ENCODE measurements at regions of chr1 and their contacts with region 1.

Region 1: GRCh38 chr1:26889551-26890466 is at the start of gene GPN2:
- DNase-seq: peak; percentile 66

Region 2: DNA sequence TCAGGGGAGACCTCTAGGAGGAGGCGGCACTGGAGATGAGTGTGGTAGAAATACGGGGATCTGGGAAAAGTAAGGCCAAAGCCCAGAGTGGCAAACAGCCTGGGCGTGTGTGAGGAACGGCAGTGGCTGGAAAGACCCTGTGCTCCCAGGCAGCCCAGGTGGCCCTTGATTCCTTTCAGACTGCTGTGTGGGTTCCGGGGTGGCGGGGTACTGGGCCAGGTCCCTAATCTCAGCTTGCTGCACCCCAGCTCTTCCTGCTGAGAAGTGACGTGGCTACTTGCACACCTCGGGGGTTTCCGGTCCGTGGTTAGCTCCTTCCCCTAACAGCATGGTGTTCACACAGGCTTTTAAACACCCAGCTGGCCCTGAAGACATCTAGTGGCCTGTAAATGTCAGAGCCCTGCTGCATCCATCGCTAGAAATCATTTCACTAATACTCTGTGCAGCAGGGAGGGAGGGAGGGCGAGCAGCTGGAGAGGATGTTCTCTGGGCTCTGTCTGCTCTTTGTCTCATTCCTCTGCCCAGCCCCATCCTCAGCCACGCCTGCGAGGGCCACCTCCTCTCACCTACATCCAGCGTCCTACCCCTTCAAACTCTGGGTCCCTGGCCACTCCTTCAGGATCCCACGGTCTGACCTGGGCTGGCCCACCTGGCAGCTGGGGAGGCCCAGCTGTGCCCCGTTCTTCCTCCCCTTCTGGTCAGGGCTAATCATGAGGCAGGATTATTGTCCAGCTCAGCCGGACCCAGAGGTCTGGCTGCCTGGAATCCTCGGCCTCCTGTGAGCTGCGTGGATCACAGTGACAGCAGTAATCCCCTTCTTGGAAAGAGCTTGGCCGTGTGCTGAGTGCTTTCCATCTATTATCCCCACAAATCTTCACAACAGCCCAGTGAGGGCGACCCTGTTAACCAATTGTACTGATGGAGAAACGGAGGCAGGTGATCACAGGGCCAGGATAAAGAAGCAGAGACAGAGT is 56.1 kb before region 1 on chr1:
- in situ Hi-C with region 1: loop called (anchors 10 kb)
- DNase-seq: no peak